ENCODE measurements at regions of chr4 and their contacts with region 1.

Region 1: GRCh38 chr4:52545099-52546069 is 113.7 kb downstream of the USP46 start:
- DNase-seq: peak; percentile 84
- H3K4me3 ChIP-seq: peak overlapping the region; percentile 62
- H3K27ac ChIP-seq: no peak overlapping the region
- H3K4me1 ChIP-seq: no peaks in the 10 kb centered on the region
- H3K27me3 ChIP-seq: no peaks in the 10 kb centered on the region

Region 2: GRCh38 chr4:52234561-52235440 is 310.6 kb before region 1 on chr4:
- in situ Hi-C with region 1: loop called (anchors 25 kb)
- DNase-seq: peak; percentile 55
- H3K4me3 ChIP-seq: no peak overlapping the region
- H3K27ac ChIP-seq: no peak overlapping the region
- H3K4me1 ChIP-seq: no peaks in the 10 kb centered on the region
- H3K27me3 ChIP-seq: 0 out of 2 replicates have a peak, but pooled peaks cover 11% of the 10 kb centered on the region